ENCODE measurements at regions of chr17 and their contacts with region 1.

Region 1: DNA sequence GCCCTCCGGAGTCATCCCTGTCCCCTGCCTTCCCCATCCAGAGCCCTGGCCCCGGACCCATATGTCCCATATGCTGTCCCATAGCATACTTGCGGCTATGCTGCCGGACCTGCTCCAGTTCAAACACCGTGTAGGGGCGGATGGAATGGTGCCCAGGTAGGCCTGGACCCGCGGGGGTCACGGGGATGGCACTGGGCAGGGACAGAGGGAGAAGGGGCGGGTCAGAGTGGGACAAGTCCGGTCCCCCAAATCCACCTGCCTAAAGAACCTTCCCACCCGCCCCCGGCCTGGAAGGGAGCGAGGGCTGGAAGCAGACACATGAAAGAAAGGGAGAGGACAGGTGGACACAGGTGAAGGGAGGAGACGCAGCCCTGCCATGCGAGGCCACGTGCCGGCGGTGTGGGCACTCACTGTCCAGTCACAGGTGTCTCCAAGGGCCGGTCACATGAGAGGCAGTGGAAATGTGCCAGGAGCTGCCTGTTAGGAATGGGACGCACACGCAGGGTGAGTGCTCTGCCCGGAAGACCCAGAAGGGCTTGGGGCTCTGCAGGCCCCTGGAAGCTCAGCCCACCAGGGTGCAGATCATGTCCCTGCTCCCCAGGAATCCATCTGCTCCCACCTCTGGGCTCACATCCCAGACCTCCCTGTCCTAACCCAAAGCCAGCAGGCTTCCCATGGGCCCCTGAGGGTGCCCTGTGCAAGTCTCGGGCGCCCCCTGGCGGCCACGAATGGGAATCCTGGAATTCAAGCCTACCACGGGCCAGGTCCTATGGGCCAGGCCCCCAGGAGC is 14.0 kb downstream of the UBALD2 start:
- DNase-seq: peak; percentile 99
- H3K4me3 ChIP-seq: no peak overlapping the region; a peak in 1 of 4 replicates
- H3K27ac ChIP-seq: no peak overlapping the region
- H3K4me1 ChIP-seq: peaks cover 5 to 10% of the 10 kb centered on the region in 2 experiments; a peak in 1 of 4 replicates
- H3K27me3 ChIP-seq: no peaks in the 10 kb centered on the region
- CTCF ChIP-seq: peak; percentile 99
- EP300 ChIP-seq: no peak
- RAD21 ChIP-seq: peak; percentile 97

Region 2: DNA sequence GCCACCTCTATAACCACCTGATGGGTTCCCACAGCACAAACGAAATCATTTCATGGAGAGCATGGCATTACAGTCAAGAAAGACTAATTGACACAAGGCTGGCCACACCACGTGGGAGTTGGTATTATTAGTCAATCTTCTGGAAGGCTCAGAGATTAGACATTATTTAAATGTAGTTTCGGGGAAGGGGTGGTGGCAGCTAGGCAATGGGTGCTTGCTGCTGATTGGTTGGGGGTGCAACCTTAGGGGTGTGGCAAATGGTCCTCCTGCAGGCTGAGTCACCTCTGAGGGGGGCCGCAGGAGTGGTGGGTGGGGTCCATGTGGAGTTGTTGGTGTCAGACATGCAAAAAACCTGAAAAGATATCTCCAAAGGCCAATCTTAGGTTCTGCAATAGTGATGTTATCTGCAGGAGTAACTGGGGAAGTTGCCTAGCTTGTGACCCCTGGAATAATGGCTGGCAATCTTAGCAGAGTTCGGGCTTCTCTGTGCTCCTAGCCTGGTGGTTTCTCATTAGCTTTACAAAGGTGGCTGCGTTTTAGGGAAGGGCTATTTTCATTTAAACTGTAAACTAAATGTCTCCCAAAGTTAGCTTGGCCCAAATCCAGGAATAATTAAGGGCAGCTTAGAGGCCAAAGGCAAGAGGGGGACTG is 295.5 kb before region 1 on chr17:
- CTCF ChIA-PET with region 1: no interaction called
- POLR2A ChIA-PET with region 1: no interaction called
- DNase-seq: no peak
- H3K4me3 ChIP-seq: no peak overlapping the region
- H3K27ac ChIP-seq: peak overlapping the region in 1 of 2 experiments; percentile 98; a peak in 1 of 4 replicates
- H3K4me1 ChIP-seq: peaks cover 0 to 9% of the 10 kb centered on the region in 2 experiments; a peak in 2 of 4 replicates
- H3K27me3 ChIP-seq: no peaks in the 10 kb centered on the region
- CTCF ChIP-seq: no peak
- EP300 ChIP-seq: no peak
- RAD21 ChIP-seq: no peak

Region 3: DNA sequence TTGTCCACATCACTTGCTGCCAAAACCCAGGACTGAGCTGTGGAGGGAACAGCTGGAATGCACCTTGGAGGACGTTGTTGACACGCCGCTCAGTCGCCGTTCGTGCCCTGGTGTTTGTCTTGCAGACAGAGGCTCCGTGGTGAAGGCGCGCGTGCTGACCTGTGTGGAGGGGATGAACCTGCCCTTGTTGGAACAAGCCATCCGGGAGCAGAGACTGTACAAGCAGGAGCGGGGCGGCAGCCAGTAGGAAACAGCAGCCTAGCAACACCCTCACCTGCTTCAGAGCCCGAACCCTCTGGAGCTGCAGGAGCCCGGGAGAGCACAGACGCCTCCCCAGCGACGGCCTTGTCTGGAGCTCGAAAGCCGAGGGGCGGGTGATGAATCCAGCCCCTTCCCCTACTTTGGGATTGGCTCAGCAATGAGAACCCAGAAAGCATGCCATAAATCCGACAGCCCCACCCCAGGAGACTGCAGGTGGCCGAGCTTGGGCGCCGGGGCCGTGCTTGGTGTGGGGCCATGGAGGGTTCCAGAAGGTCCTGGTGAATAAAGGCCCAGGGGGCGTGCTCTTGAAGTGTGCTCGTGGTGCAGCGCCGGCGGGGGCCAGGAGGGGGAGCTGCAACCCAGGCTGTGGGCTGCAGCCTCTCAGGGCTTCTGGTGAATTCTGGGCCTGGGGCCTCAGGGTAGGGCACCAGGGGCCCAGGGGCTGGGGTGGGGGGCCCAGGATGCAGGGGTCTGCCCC is 279.0 kb before region 1 on chr17:
- CTCF ChIA-PET with region 1: interaction called, 18 read pairs
- POLR2A ChIA-PET with region 1: no interaction called
- DNase-seq: peak; percentile 98
- H3K4me3 ChIP-seq: no peak overlapping the region; a peak in 1 of 4 replicates
- H3K27ac ChIP-seq: no peak overlapping the region; a peak in 1 of 4 replicates
- H3K4me1 ChIP-seq: peaks cover 0 to 13% of the 10 kb centered on the region in 2 experiments; a peak in 2 of 4 replicates
- H3K27me3 ChIP-seq: no peaks in the 10 kb centered on the region
- CTCF ChIP-seq: peak; percentile 94
- EP300 ChIP-seq: peak in 1 of 2 experiments; percentile 31; a peak in 1 of 4 replicates
- RAD21 ChIP-seq: peak; percentile 72

Region 4: GRCh38 chr17:76103274-76104139 is 175.6 kb before region 1 on chr17 and contains the start of gene EXOC7:
- CTCF ChIA-PET with region 1: interaction called, 53 read pairs
- POLR2A ChIA-PET with region 1: no interaction called
- DNase-seq: peak; percentile 100
- H3K4me3 ChIP-seq: peak within 1 kb of the TSS; percentile 68 to 95
- H3K27ac ChIP-seq: peak within 1 kb of the TSS; percentile 71 to 87
- H3K4me1 ChIP-seq: peaks cover 3 to 15% of the 10 kb centered on the region in 2 experiments; a peak in 2 of 4 replicates
- H3K27me3 ChIP-seq: no peaks in the 10 kb centered on the region
- CTCF ChIP-seq: peak; percentile 13; the same call in 1 of the 2 replicates
- EP300 ChIP-seq: no peak
- RAD21 ChIP-seq: no peak
- polyA plus RNA-seq, gene EXOC7: 129 and 167 TPM in 2 replicates

Region 5: DNA sequence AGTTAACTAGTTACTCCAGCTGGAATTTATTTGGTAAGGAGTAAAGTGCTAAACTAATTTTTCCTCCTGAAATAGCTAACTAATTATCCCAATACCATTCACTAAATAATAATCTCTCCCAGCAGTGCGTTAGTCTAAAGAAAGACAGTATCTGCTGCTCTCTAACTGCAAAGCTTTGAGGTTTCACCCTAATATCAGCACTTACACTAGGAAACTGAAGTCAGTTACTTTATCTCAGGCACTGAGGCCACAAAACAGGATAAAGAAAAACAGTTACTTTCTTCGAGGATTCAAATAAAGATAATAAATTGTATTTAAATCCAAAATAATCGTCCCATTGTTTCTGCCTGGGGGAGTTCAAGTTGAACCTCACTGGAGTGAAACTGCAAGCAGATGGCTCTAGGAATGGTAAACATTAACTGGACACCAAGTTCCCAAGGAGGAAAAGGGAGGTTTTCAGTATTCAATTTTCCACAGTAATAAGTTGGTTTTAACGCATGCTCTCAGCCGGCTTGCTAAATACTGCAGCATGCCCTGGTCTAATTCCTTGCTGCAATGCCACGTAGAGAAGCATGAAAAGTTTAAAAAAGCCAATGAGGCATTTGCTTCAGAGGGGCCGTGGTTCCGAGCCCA is 118.1 kb before region 1 on chr17:
- CTCF ChIA-PET with region 1: interaction called, 22 read pairs
- POLR2A ChIA-PET with region 1: no interaction called
- DNase-seq: no peak
- H3K4me3 ChIP-seq: no peak overlapping the region
- H3K27ac ChIP-seq: no peak overlapping the region
- H3K4me1 ChIP-seq: no peaks in the 10 kb centered on the region
- H3K27me3 ChIP-seq: no peaks in the 10 kb centered on the region
- CTCF ChIP-seq: no peak
- EP300 ChIP-seq: no peak
- RAD21 ChIP-seq: no peak

Region 6: GRCh38 chr17:76204277-76204676 is 74.9 kb before region 1 on chr17:
- CTCF ChIA-PET with region 1: interaction called, 18 read pairs
- POLR2A ChIA-PET with region 1: no interaction called
- DNase-seq: no peak
- H3K4me3 ChIP-seq: peak overlapping the region in 1 of 2 experiments; percentile 4; a peak in 1 of 4 replicates
- H3K27ac ChIP-seq: peak overlapping the region in 1 of 2 experiments; percentile 64; a peak in 2 of 4 replicates
- H3K4me1 ChIP-seq: peaks cover 6 to 11% of the 10 kb centered on the region in 2 experiments; a peak in 3 of 4 replicates
- H3K27me3 ChIP-seq: no peaks in the 10 kb centered on the region
- CTCF ChIP-seq: no peak
- EP300 ChIP-seq: no peak
- RAD21 ChIP-seq: no peak

Region 7: DNA sequence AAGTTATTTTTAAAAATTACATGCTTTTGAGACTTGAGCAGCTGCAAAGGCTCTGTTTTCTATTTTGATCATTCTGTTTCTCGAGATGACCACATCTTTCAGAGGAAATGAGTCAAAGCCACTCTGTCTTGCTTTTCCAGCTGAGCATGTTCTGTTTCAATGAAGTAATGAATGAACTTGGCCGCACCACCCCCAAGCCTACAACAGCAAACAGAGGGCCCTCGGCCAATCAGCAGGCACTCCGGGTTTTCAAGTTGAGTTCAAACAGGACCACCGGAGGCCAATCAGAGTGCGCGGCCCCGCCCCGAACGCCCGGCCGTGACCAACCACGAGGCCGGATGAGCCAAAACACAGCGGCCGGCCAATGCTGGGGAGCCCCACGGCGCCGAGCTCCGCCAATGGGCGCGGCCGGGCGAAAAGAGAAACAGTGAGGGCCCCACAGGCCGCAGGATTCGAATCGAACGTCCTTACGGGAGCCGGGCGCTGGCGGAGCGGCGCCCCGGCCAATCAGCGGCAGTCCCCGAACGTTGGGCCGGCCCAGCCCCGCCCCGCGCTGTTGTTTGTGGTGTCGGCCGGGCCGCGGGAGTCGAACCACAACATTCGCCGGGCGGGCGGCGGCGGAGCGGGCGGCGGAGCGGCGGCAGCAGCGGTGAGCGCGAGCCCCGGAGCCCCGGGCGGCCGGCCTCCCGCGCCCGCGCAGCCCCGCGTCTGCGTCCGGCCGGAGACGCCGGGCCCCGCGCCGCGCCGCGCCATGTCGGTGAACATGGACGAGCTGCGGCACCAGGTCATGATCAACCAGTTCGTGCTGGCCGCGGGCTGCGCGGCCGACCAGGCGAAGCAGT is 14.2 kb before region 1 on chr17 and contains the start of gene UBALD2:
- CTCF ChIA-PET with region 1: interaction called, 130 read pairs
- POLR2A ChIA-PET with region 1: no interaction called
- DNase-seq: peak; percentile 100
- H3K4me3 ChIP-seq: peak within 1 kb of the TSS; percentile 75 to 87
- H3K27ac ChIP-seq: peak within 1 kb of the TSS; percentile 77 to 95
- H3K4me1 ChIP-seq: peaks cover 19 to 22% of the 10 kb centered on the region in 2 experiments; a peak in 3 of 4 replicates
- H3K27me3 ChIP-seq: no peaks in the 10 kb centered on the region
- CTCF ChIP-seq: no peak
- EP300 ChIP-seq: peak; percentile 35 to 64; a peak in 1 of 4 replicates
- RAD21 ChIP-seq: no peak
- polyA plus RNA-seq, gene UBALD2: 16.7 and 27.0 TPM in 2 replicates

Region 8: DNA sequence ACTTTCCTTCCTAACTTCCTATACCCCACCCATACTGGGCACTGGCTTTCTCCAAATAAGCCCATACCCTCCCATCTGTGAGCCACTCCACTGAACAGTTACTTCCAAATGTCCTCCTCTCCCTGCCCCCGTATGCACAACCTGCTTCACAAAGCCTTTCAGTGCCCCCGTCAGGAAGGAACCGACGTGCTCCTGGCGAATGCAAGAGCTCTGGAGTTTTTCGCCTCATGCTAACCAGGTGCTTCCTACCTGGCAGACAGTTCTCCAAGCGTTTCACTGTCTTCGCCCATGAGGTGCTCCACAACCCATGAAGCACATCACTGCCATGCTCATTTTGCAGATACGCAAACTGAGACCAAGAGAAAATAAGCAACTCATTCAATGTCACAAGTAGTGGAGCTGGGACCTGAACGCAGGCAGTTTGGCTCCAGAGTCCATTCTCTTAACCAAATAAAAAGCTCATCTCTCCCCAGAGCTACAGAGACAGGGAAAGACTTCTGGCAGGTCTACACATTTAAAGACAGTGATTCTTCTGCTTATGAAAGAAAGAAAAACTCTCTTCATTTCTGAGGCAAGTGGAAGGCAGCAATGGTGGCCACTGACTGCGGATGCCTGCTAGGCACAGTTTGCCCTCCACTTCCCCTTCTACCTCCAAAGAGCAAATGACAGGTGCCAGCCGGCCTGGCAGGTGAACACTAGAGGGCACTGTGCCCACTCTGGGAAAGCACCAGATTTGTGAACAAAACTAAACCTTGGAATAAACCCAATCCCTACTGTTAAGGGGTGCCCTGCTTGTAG is 129.1 kb after region 1 on chr17:
- CTCF ChIA-PET with region 1: interaction called, 16 read pairs
- POLR2A ChIA-PET with region 1: no interaction called
- DNase-seq: peak; percentile 82
- H3K4me3 ChIP-seq: no peak overlapping the region; a peak in 1 of 4 replicates
- H3K27ac ChIP-seq: no peak overlapping the region
- H3K4me1 ChIP-seq: peaks cover 0 to 16% of the 10 kb centered on the region in 2 experiments; a peak in 2 of 4 replicates
- H3K27me3 ChIP-seq: no peaks in the 10 kb centered on the region
- CTCF ChIP-seq: peak; percentile 99
- EP300 ChIP-seq: no peak
- RAD21 ChIP-seq: peak; percentile 92